H1 (cell line): ENCODE measurements at regions of chr12 and their contacts with region 1.

Region 1: DNA sequence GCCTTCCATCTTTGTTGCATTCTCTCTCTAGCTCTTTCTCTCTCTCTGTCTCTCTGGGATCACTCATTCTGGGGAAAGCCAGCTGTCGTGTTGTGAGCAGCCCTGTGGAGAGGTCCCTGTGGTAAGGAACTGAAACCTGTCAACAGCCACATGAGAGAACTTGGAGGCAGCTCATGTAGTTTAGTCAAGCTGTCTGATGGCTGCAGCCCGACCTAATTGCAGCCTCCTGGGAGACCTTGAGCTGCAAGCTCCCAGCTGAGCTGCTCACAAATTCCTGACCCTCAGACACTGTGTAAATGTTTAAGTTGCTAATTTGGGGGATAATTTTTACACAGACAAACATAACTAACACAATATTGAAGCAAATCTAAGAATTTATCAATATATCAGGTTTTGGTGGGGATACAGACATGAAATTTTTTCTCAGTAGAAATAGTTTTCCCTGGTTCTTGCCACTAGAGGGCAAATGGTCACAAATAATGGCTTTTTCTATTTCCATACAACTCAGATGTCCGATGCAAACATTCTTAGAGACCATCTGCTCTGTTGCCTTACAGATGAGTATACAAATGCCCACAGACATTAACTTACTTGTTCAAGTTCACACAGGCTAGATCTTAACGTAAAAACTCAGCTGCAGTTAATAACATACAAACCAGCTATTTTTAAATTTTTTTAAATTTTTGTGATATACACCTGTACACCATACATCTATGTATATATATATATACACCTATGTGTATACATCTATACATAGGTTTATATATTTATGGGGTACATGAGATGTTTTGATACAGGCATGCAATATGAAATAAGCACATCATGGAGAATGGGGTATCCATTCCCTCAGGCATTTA is 15.5 kb upstream of the KRR1 start:
- DNase-seq: no peak
- H3K4me3 ChIP-seq: no peak overlapping the region
- H3K27ac ChIP-seq: no peak overlapping the region
- H3K4me1 ChIP-seq: no peaks in the 10 kb centered on the region
- H3K27me3 ChIP-seq: no peaks in the 10 kb centered on the region
- CTCF ChIP-seq: peak in 2 of 3 experiments; percentile 46 to 50; a peak in 2 of 4 replicates
- EP300 ChIP-seq: no peak
- POLR2A ChIP-seq: no peak
- RAD21 ChIP-seq: peak; percentile 81 to 84

Region 2: GRCh38 chr12:75480469-75480949 is 46.4 kb before region 1 on chr12 and contains the start of gene GLIPR1:
- CTCF ChIA-PET with region 1: interaction called, 10 read pairs
- POLR2A ChIA-PET with region 1: no interaction called
- DNase-seq: no peak
- H3K4me3 ChIP-seq: no peak within 1 kb of the TSS
- H3K27ac ChIP-seq: no peak within 1 kb of the TSS
- H3K4me1 ChIP-seq: peaks cover 0 to 8% (median 5%) of the 10 kb centered on the region in 4 experiments; a peak in 5 of 7 replicates
- H3K27me3 ChIP-seq: no peaks in the 10 kb centered on the region
- CTCF ChIP-seq: no peak
- EP300 ChIP-seq: no peak
- POLR2A ChIP-seq: no peak
- RAD21 ChIP-seq: no peak
- total RNA-seq, gene GLIPR1: 1.5 and 1.7 TPM in 2 replicates

Region 3: GRCh38 chr12:75511116-75512048 is 15.5 kb before region 1 on chr12 and contains the start of gene KRR1:
- CTCF ChIA-PET with region 1: interaction called, 4 read pairs
- POLR2A ChIA-PET with region 1: interaction called, 10 read pairs
- DNase-seq: peak; percentile 79 to 94
- H3K4me3 ChIP-seq: peak within 1 kb of the TSS; percentile 93 to 98 (median 96)
- H3K27ac ChIP-seq: peak within 1 kb of the TSS; percentile 84
- H3K4me1 ChIP-seq: no peaks in the 10 kb centered on the region; a peak in 2 of 7 replicates
- H3K27me3 ChIP-seq: no peaks in the 10 kb centered on the region
- CTCF ChIP-seq: no peak
- EP300 ChIP-seq: no peak
- POLR2A ChIP-seq: peak in 1 of 2 experiments; percentile 92; a peak in 2 of 3 replicates
- RAD21 ChIP-seq: peak in 1 of 2 experiments; percentile 14; a peak in 1 of 4 replicates
- total RNA-seq, gene KRR1: 73.8 and 80.1 TPM in 2 replicates

Region 4: DNA sequence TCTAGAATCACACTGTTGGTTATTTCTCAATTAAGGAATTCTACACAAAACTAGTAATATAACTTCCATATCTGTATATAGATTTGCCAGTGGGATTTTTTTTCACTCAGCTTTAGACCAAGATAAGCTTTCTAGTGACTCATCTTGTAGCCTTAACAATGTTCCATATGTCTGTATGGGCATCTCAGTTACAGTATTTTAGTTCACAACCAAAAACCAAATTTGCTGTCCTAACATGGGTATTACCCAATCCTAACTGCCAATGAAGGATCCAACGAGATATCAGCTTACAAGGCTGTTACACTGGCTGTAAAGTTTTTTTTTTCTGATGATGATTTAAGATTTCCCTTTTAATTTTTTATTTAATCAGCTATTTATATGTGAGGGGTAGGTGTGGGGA is 16.1 kb after region 1 on chr12:
- CTCF ChIA-PET with region 1: interaction called, 22 read pairs
- POLR2A ChIA-PET with region 1: no interaction called
- DNase-seq: no peak
- H3K4me3 ChIP-seq: no peak overlapping the region
- H3K27ac ChIP-seq: no peak overlapping the region
- H3K4me1 ChIP-seq: no peaks in the 10 kb centered on the region
- H3K27me3 ChIP-seq: no peaks in the 10 kb centered on the region
- CTCF ChIP-seq: no peak
- EP300 ChIP-seq: no peak
- POLR2A ChIP-seq: no peak
- RAD21 ChIP-seq: no peak

Region 5: DNA sequence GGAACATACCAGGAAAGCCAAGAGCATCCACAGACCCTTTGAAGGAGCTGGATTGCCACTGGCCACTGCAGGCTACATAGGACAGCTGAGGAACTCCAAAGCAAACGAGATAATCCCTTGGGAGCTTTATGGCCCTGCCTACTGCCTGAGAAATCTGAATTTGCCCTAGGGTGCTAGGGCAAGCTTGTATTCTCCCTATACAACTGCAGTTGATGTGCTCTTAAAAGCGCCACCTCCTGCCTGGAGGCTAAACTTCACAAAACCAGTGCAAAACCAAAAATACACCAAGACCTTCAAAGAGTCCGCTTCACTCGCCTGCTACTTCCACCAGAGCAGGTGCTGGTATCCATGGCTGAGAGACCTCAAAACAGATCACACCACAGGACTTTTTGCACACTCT is 84.2 kb after region 1 on chr12:
- CTCF ChIA-PET with region 1: interaction called, 10 read pairs
- POLR2A ChIA-PET with region 1: no interaction called
- DNase-seq: no peak
- H3K4me3 ChIP-seq: no peak overlapping the region
- H3K27ac ChIP-seq: no peak overlapping the region
- H3K4me1 ChIP-seq: no peaks in the 10 kb centered on the region
- H3K27me3 ChIP-seq: no peaks in the 10 kb centered on the region
- CTCF ChIP-seq: peak in 2 of 3 experiments; percentile 31 to 37; a peak in 3 of 4 replicates
- EP300 ChIP-seq: no peak
- POLR2A ChIP-seq: no peak
- RAD21 ChIP-seq: peak; percentile 29 to 42

Region 6: GRCh38 chr12:76031537-76032073 is 504.7 kb after region 1 on chr12 and contains the start of gene PHLDA1:
- CTCF ChIA-PET with region 1: interaction called, 36 read pairs
- POLR2A ChIA-PET with region 1: interaction called, 3 read pairs
- DNase-seq: peak in 1 of 2 experiments; percentile 84
- H3K4me3 ChIP-seq: peak within 1 kb of the TSS; percentile 89 to 94 (median 92)
- H3K27ac ChIP-seq: peak within 1 kb of the TSS; percentile 54; the same call in 1 of the 2 replicates
- H3K4me1 ChIP-seq: peaks cover 0 to 11% (median 2%) of the 10 kb centered on the region in 4 experiments; a peak in 5 of 7 replicates
- H3K27me3 ChIP-seq: no peaks in the 10 kb centered on the region; a peak in 1 of 7 replicates
- CTCF ChIP-seq: peak; percentile 39 to 74 (median 42)
- EP300 ChIP-seq: no peak
- POLR2A ChIP-seq: peak; percentile 2 to 42; a peak in 1 of 3 replicates
- RAD21 ChIP-seq: peak; percentile 64 to 68
- total RNA-seq, gene PHLDA1: 19.4 and 19.8 TPM in 2 replicates

Region 7: GRCh38 chr12:76037130-76038103 is 510.5 kb after region 1 on chr12:
- CTCF ChIA-PET with region 1: interaction called, 36 read pairs
- POLR2A ChIA-PET with region 1: interaction called, 4 read pairs
- DNase-seq: no peak
- H3K4me3 ChIP-seq: no peak overlapping the region
- H3K27ac ChIP-seq: no peak overlapping the region
- H3K4me1 ChIP-seq: peaks cover 2 to 4% (median 4%) of the 10 kb centered on the region in 4 experiments; a peak in 6 of 7 replicates
- H3K27me3 ChIP-seq: no peaks in the 10 kb centered on the region
- CTCF ChIP-seq: peak in 2 of 3 experiments; percentile 81 to 88; a peak in 3 of 4 replicates
- EP300 ChIP-seq: no peak
- POLR2A ChIP-seq: peak; percentile 23 to 55; a peak in 2 of 3 replicates
- RAD21 ChIP-seq: peak; percentile 94 to 98